ENCODE measurements at regions of chr1 and their contacts with region 1.

Region 1: GRCh38 chr1:45569962-45570581 is 13.8 kb upstream of the NASP start:
- DNase-seq: peak; percentile 75
- CTCF ChIP-seq: peak; percentile 96

Region 2: GRCh38 chr1:45508295-45509151 is 61.5 kb before region 1 on chr1:
- in situ Hi-C with region 1: loop called (anchors 10 kb)
- DNase-seq: no peak
- CTCF ChIP-seq: no peak

Region 3: GRCh38 chr1:45521398-45522323 is 48.4 kb before region 1 on chr1 and contains the start of gene PRDX1:
- in situ Hi-C with region 1: loop called (anchors 5 kb)
- DNase-seq: peak; percentile 96
- CTCF ChIP-seq: no peak

Region 4: DNA sequence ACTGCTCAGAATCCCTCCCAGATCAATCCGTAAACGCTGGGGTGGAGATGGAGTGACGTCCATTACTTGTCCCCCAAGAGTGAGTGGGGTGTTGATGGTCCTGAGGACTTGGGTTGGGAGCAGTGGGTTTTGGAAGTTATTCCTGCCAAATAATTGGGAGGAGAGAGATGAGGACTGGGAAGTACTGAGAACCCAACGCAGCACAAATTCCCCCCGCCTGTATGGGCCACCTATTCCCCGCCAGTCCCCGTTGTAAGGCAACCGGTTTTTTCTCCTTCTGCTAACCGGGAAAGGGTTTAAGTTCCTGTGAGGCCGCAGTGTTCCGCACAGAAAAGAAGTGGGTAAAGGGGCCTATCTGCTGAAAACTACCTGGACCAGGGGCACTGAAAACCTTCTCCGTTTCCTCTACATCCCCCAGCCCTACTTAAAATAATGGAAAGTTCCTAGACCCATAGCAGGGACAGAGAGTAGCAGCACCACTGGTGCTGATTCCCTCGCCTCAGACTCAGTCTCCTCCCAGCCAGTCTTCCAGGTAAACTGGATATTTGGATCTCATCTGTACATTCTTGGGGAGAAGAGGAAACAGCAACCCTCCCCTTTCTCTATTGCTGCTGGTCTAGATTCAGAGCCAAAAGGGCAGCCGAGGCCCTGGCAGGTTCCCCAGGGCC is 633.8 kb after region 1 on chr1:
- in situ Hi-C with region 1: no loop called
- DNase-seq: no peak
- CTCF ChIP-seq: no peak